Activated CD4-positive, alpha-beta T cell treated with anti-CD3 and anti-CD28 coated beads, Interleukin-2, amount 10 ng/mL, durations not matched to agents 24 days and 14 days (primary cell): ENCODE measurements at regions of chr2 and their contacts with region 1.

Region 1: GRCh38 chr2:221573430-221574230 is 1.5 kb upstream of the EPHA4 start:
- DNase-seq: peak; percentile 95
- H3K4me3 Mint-ChIP-seq: peak overlapping the region; percentile 86
- H3K27ac Mint-ChIP-seq: peak overlapping the region; percentile 29
- H3K4me1 Mint-ChIP-seq: peaks cover 28% of the 10 kb centered on the region
- H3K27me3 Mint-ChIP-seq: peaks cover 62% of the 10 kb centered on the region

Region 2: DNA sequence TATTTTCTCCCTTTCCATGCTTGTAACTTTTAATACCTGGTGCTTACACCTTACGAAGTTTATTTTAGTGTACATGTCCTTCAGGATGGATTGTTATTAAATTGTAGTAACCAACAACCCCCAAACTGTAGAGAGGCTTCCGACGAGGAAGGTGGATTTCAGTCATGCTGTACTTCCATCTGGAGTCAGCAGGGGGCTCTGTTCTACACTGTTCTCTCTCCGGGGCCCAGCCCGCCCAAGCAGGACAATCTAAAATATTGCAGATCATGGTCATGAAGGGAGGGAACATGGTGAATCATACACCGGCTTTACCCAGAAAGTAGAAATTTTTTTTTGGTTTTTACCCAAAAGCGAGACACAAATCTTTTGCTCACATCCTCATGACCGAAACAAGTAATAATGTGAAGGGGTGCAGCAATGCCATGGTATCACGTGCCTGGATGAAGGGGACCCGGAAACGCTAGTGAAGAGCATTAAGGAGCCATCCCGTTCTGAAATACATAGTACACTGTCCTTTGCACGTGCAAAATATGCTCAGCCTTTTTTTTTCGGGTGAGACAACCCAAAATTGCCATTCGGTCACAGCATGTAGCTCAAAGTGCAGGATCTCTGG is 886.3 kb before region 1 on chr2:
- intact Hi-C with region 1: loop called (anchors 1 kb)
- DNase-seq: peak; percentile 86
- H3K4me3 Mint-ChIP-seq: no peak overlapping the region
- H3K27ac Mint-ChIP-seq: no peak overlapping the region
- H3K4me1 Mint-ChIP-seq: no peaks in the 10 kb centered on the region
- H3K27me3 Mint-ChIP-seq: peaks cover 2% of the 10 kb centered on the region

Region 3: GRCh38 chr2:221377066-221377465 is 196.6 kb before region 1 on chr2:
- intact Hi-C with region 1: loop called (anchors 5 kb)
- DNase-seq: no peak
- H3K4me3 Mint-ChIP-seq: no peak overlapping the region
- H3K27ac Mint-ChIP-seq: no peak overlapping the region
- H3K4me1 Mint-ChIP-seq: no peaks in the 10 kb centered on the region
- H3K27me3 Mint-ChIP-seq: peaks cover 6% of the 10 kb centered on the region

Region 4: DNA sequence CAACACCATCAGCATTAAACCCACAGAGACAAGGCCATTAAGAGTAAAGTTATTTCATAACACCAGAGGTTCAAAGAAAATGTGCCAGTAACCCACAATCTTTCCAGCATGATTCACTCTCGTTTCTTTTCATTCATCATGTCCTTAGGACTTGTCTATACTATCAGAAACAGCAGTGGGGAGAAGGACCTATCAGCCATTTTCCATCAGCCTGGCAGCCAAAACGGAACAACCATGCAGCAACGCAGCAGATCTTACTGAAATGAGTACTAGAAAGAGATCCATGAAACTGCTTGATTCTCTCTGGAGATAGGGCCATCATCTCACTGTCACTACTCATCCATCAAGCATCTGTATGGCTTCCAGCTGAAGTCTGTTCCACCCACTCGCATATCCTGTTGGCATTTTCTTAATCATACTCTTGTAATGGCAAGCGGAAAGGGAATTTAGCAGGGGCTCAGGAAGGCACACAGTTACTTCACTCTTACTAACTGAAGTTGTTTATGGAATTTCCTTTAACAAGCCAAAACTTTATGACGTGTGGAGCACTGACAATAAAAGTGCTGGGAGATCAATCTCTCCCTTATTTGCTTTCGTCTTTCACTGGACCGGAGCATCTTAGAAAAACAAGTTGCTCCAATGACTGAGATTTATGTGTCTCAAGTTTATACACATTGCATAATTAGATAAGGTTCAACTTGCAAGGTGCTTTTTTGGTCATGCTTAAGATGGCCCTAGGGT is 71.2 kb before region 1 on chr2:
- intact Hi-C with region 1: loop called (anchors 5 kb)
- DNase-seq: no peak
- H3K4me3 Mint-ChIP-seq: no peak overlapping the region
- H3K27ac Mint-ChIP-seq: no peak overlapping the region
- H3K4me1 Mint-ChIP-seq: peaks cover 6% of the 10 kb centered on the region
- H3K27me3 Mint-ChIP-seq: peaks cover 3% of the 10 kb centered on the region

Region 5: GRCh38 chr2:221618007-221618406 is 44.4 kb after region 1 on chr2:
- intact Hi-C with region 1: no loop called
- DNase-seq: no peak
- H3K4me3 Mint-ChIP-seq: no peak overlapping the region
- H3K27ac Mint-ChIP-seq: no peak overlapping the region
- H3K4me1 Mint-ChIP-seq: no peaks in the 10 kb centered on the region
- H3K27me3 Mint-ChIP-seq: no peaks in the 10 kb centered on the region

Region 6: GRCh38 chr2:221747289-221747972 is 173.8 kb after region 1 on chr2:
- intact Hi-C with region 1: no loop called
- DNase-seq: no peak
- H3K4me3 Mint-ChIP-seq: no peak overlapping the region
- H3K27ac Mint-ChIP-seq: no peak overlapping the region
- H3K4me1 Mint-ChIP-seq: no peaks in the 10 kb centered on the region
- H3K27me3 Mint-ChIP-seq: no peaks in the 10 kb centered on the region